ENCODE measurements at regions of chr15 and their contacts with region 1.

Region 1: DNA sequence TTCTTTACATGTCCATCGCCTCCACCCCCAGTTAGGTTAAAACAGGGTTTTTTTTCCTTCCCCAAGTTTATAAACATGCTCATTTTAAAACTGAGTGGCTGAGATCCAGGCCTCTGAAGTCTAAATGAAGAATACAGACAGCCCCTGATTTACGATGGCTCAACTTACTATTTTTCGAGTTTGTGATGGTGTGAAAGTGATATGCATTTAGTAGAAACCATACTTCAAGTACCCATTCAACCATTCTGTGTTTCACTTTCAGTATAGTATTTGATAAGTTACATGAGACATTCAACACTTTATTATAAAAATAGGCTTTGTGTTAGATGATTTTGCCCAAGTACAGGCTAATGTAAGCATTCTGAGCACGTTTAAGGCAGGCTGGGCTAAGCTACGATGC is 30.5 kb upstream of the GNB5 start:
- DNase-seq: no peak
- H3K4me3 ChIP-seq: no peak overlapping the region
- H3K27ac ChIP-seq: no peak overlapping the region
- H3K4me1 ChIP-seq: no peaks in the 10 kb centered on the region
- H3K27me3 ChIP-seq: no peaks in the 10 kb centered on the region
- CTCF ChIP-seq: no peak
- EP300 ChIP-seq: no peak
- POLR2A ChIP-seq: no peak

Region 2: DNA sequence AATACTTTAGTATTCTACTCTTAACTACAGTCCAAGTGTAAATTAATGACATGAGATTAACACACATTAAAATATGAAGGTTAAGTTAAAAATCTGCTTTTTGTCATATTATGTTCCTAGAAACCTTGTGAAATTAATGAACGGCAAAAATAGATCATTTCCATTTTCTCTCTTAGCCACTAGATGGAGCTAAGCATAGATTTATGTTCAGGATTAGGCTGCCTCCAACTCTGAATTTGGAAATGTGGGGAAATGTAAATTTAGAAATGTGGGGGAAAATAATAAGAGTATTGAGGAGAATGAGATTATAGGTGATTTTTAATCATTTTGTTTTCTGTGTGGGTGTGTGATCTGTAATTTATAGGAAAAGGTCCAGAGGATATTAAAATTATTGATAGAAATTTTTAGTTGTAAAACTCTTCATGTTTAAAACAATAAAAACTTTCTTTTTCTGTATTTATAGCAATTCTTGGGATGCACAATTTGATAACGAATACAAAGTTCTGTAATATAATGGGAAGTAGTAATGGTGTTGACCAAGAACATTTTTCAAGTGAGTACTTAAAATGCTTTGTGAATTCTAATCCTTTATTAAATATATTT is 333.0 kb before region 1 on chr15:
- intact Hi-C with region 1: loop called (anchors 5 kb)
- DNase-seq: no peak
- H3K4me3 ChIP-seq: no peak overlapping the region
- H3K27ac ChIP-seq: no peak overlapping the region
- H3K4me1 ChIP-seq: peaks cover 0 to 17% (median 14%) of the 10 kb centered on the region in 4 donors
- H3K27me3 ChIP-seq: no peaks in the 10 kb centered on the region
- CTCF ChIP-seq: peak in 3 of 4 experiments; percentile 39 to 72 (median 63)
- EP300 ChIP-seq: no peak
- POLR2A ChIP-seq: no peak

Region 3: DNA sequence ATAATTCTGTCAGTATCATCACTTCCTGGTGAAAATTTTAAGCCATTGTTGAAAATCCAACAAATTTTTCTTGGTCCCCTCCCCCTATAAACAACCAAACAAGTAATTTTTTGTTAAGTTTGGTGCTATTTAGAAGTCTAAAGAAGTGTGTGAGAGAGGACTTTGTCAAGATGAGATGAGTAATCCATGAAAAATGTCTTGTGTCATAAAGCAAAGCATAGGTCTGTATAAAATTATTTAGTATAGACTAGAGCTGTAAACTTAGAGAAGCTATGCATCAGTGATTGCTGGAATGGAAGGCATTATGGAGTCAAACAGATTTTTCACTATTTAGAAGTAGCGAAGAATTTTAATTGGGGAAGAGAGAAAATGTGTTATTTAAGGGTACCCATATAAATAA is 171.3 kb before region 1 on chr15:
- intact Hi-C with region 1: no loop called
- DNase-seq: no peak
- H3K4me3 ChIP-seq: no peak overlapping the region
- H3K27ac ChIP-seq: no peak overlapping the region
- H3K4me1 ChIP-seq: peaks cover 0 to 28% (median 23%) of the 10 kb centered on the region in 4 donors
- H3K27me3 ChIP-seq: no peaks in the 10 kb centered on the region
- CTCF ChIP-seq: no peak
- EP300 ChIP-seq: no peak
- POLR2A ChIP-seq: no peak

Region 4: GRCh38 chr15:52139599-52140491 is 81.9 kb before region 1 on chr15:
- intact Hi-C with region 1: no loop called
- DNase-seq: peak; percentile 85
- H3K4me3 ChIP-seq: no peak overlapping the region
- H3K27ac ChIP-seq: no peak overlapping the region
- H3K4me1 ChIP-seq: peaks cover 0 to 26% (median 18%) of the 10 kb centered on the region in 4 donors
- H3K27me3 ChIP-seq: no peaks in the 10 kb centered on the region
- CTCF ChIP-seq: peak in 3 of 4 experiments; percentile 50 to 70 (median 60)
- EP300 ChIP-seq: no peak
- POLR2A ChIP-seq: no peak